A673 (cell line): ENCODE measurements at regions of chr12 and their contacts with region 1.

Region 1: GRCh38 chr12:25590011-25590721 is 37.1 kb upstream of the LMNTD1 start:
- DNase-seq: no peak
- H3K4me3 ChIP-seq: no peak overlapping the region
- H3K27ac ChIP-seq: no peak overlapping the region
- H3K4me1 ChIP-seq: no peaks in the 10 kb centered on the region
- H3K27me3 ChIP-seq: no peaks in the 10 kb centered on the region
- CTCF ChIP-seq: no peak

Region 2: DNA sequence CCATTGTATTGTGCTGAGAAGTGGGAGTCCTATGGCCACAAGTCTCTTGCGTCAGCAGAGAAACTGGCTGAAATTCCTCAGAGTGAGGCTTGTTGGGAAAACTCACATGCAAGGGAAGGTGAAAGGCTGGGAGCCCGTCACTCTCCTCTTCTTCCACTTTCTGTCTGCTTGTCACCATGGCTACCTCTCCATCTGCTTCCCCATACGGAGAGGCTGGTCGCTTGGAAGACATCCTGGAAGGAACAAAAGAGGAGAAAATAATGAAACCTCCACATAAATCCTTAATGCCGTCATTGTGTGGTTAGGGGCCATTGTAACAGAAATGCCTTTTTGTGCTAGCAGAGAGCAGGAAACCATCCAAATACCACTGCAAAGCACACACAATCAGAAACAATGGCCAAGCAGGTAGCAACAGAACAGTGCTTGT is 1694.4 kb before region 1 on chr12:
- CTCF ChIA-PET with region 1: no interaction called
- POLR2A ChIA-PET with region 1: interaction called, 14 read pairs
- intact Hi-C with region 1: no loop called
- DNase-seq: no peak
- H3K4me3 ChIP-seq: no peak overlapping the region
- H3K27ac ChIP-seq: no peak overlapping the region
- H3K4me1 ChIP-seq: no peaks in the 10 kb centered on the region
- H3K27me3 ChIP-seq: no peaks in the 10 kb centered on the region
- CTCF ChIP-seq: no peak

Region 3: GRCh38 chr12:25184132-25184531 is 406.0 kb before region 1 on chr12:
- CTCF ChIA-PET with region 1: no interaction called
- POLR2A ChIA-PET with region 1: no interaction called
- intact Hi-C with region 1: no loop called
- DNase-seq: no peak
- H3K4me3 ChIP-seq: no peak overlapping the region
- H3K27ac ChIP-seq: no peak overlapping the region
- H3K4me1 ChIP-seq: no peaks in the 10 kb centered on the region
- H3K27me3 ChIP-seq: no peaks in the 10 kb centered on the region
- CTCF ChIP-seq: no peak

Region 4: GRCh38 chr12:25546318-25546717 is 43.8 kb before region 1 on chr12:
- CTCF ChIA-PET with region 1: no interaction called
- POLR2A ChIA-PET with region 1: no interaction called
- intact Hi-C with region 1: no loop called
- DNase-seq: no peak
- H3K4me3 ChIP-seq: no peak overlapping the region
- H3K27ac ChIP-seq: no peak overlapping the region
- H3K4me1 ChIP-seq: no peaks in the 10 kb centered on the region
- H3K27me3 ChIP-seq: peaks cover 7% of the 10 kb centered on the region
- CTCF ChIP-seq: no peak

Region 5: DNA sequence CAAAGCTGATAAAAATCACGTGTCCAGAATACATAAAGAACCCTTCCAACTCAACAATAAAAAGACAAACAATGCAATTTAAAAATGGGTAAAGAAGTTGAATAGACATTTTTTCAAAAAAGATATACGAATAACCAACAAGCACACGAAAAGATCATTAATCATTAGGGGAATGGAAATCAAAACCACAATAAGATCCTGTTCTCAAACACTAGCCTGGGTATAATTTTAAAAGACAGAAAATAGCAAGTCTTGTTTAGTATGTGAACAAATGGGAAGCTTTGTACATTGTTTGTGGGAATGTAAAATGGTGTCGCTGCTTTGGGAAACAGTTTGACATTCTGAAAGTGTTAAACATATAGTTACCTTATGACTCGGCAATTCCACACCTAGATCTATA is 49.2 kb after region 1 on chr12:
- CTCF ChIA-PET with region 1: no interaction called
- POLR2A ChIA-PET with region 1: no interaction called
- intact Hi-C with region 1: no loop called
- DNase-seq: no peak
- H3K4me3 ChIP-seq: no peak overlapping the region
- H3K27ac ChIP-seq: no peak overlapping the region
- H3K4me1 ChIP-seq: no peaks in the 10 kb centered on the region
- H3K27me3 ChIP-seq: no peaks in the 10 kb centered on the region
- CTCF ChIP-seq: no peak

Region 6: DNA sequence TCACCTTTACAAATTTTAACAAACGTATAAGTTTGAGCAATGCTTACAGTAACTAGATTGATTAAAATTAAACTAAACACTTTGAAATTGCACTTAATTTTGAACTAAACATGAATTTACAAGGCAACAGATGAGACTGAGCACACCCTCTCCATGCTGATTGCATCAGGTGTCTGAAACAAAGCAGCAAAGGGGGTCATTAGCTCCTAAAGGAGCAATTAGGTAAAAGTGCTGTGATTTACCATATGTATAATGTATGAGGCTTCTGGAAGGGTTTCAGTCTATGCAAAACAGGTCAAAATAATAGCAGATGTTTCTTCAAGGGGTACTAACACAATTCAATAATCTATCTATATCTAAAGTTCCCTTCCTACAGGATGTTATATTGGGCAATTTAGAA is 61.8 kb after region 1 on chr12:
- CTCF ChIA-PET with region 1: no interaction called
- POLR2A ChIA-PET with region 1: no interaction called
- intact Hi-C with region 1: no loop called
- DNase-seq: no peak
- H3K4me3 ChIP-seq: no peak overlapping the region
- H3K27ac ChIP-seq: no peak overlapping the region
- H3K4me1 ChIP-seq: peaks cover 4% of the 10 kb centered on the region
- H3K27me3 ChIP-seq: no peaks in the 10 kb centered on the region
- CTCF ChIP-seq: no peak